Lower lobe of right lung (tissue), 2 donors: ENCODE measurements at regions of chr9 and their contacts with region 1.

Region 1: DNA sequence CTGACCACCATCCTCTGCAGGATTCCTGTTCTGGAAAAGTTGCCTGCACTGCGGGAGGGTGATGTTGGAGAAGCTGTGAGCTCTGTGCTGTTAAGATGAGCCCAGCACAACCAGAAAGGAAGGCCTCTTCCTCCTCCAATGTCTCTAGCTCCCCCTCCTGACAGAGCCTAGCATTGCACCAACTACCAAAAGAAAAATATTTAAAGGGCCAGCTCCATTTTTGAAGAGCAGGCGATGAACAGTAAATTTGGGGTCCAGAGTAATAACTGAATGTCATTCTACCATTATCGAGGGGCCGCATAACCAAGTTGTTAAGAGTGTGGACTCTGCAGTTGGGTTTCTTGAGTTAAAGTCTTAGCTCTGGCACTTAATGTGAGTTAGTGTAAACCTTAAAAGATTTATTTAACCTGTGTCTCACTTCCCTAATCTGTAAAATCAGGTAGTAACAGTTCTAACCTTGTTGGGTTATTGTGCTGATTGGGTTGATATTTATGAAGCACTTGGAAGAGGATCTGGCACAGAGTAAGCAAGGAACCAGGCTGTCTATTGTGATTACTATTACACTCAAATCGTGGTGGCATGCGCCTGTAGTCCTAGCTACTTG is 3.9 kb downstream of the TEX53 start:
- DNase-seq: no peak
- ATAC-seq: peak; percentile 82 to 90
- H3K4me3 ChIP-seq: no peak overlapping the region
- H3K27ac ChIP-seq: no peak overlapping the region
- H3K4me1 ChIP-seq: no peaks in the 10 kb centered on the region
- H3K27me3 ChIP-seq: no peaks in the 10 kb centered on the region
- CTCF ChIP-seq: peak; percentile 88

Region 2: DNA sequence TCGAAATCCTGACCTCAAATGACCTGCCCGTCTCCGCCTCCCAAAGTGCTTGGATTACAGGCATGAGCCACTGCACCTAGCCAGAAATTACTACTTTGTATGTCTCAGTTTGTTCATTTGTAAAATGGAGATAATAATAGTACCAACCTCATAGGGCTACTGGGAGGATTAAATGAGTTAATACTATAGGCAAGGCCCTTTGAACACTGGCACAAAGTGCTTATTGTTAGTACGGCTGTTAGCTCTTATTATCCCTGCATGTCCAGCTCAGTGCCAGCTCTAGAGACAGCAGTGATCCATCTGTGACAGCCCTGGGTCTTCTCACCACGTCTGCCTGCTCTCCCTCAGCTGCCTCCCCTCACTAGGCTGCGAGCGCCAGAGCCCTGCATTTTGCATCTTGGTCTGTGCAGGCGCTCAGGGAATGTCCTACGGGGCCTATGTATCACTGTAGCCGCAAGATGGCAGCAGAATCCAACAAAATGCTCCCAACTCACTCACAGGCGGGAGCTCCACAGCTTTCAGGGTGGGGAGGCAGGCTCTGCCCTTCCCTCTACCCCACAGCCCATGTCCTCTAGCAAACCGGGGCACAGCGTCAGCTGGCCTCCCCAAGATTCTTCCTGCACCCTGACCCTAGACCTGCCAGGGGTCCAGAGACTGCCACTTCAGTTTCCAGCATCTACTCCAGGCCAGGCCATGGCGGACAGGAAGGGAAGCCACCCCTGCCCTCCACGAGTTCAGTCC is 248.2 kb before region 1 on chr9:
- intact Hi-C with region 1: loop called (anchors 10 kb)
- DNase-seq: peak; percentile 76
- ATAC-seq: peak; percentile 89 to 92
- H3K4me3 ChIP-seq: no peak overlapping the region
- H3K27ac ChIP-seq: no peak overlapping the region
- H3K4me1 ChIP-seq: peaks cover 8% of the 10 kb centered on the region
- H3K27me3 ChIP-seq: no peaks in the 10 kb centered on the region
- CTCF ChIP-seq: peak; percentile 84

Region 3: DNA sequence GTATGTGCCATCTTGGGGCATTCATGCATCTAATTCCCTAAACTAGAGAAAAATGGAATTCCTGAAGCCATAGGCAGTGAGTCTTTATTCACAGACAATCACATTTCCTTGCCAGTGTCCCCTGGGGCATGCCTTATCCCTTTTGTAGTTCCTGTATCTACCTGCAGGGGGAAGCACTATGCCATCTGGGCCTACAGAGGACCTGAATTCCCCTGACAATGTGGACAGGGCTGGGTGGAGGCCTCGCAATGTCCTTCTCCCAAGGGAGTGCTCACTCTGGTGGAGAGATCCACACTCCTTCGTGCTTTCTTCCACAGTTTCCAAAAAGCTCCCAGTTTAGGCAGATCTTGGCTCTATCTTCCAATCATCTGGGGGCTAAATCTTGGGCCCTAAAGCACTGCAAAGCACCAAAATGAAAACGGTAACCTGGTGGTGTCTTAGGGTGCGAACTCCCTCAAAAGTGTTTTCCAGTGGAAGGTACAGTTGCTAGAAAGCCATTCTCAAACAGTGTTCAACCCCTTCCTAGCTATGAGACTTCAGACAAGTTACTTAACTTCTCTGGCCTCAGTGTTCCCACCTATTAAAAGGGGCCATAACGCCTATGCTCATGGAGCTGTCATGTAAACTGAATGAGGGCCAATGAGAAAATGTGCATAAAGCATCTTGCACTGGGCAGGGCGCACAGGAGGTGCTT is 165.9 kb before region 1 on chr9:
- intact Hi-C with region 1: loop called (anchors 10 kb)
- DNase-seq: no peak
- ATAC-seq: peak; percentile 93 to 95
- H3K4me3 ChIP-seq: no peak overlapping the region
- H3K27ac ChIP-seq: no peak overlapping the region
- H3K4me1 ChIP-seq: no peaks in the 10 kb centered on the region
- H3K27me3 ChIP-seq: no peaks in the 10 kb centered on the region
- CTCF ChIP-seq: peak; percentile 79

Region 4: GRCh38 chr9:114701988-114702387 is 48.3 kb after region 1 on chr9:
- intact Hi-C with region 1: no loop called
- DNase-seq: no peak
- ATAC-seq: no peak
- H3K4me3 ChIP-seq: no peak overlapping the region
- H3K27ac ChIP-seq: no peak overlapping the region
- H3K4me1 ChIP-seq: no peaks in the 10 kb centered on the region
- H3K27me3 ChIP-seq: no peaks in the 10 kb centered on the region
- CTCF ChIP-seq: no peak